BJ (cell line): ENCODE measurements at regions of chr2 and their contacts with region 1.

Region 1: GRCh38 chr2:27303093-27304025 is 4.9 kb downstream of the UCN start:
- DNase-seq: no peak
- H3K4me3 ChIP-seq: no peak overlapping the region
- H3K27me3 ChIP-seq: peaks cover 17% of the 10 kb centered on the region
- CTCF ChIP-seq: peak; percentile 87

Region 2: GRCh38 chr2:27095745-27096651 is 207.4 kb before region 1 on chr2:
- CTCF ChIA-PET with region 1: interaction called, 41 read pairs
- POLR2A ChIA-PET with region 1: interaction called, 4 read pairs
- DNase-seq: no peak
- H3K4me3 ChIP-seq: no peak overlapping the region
- H3K27me3 ChIP-seq: no peaks in the 10 kb centered on the region
- CTCF ChIP-seq: no peak

Region 3: DNA sequence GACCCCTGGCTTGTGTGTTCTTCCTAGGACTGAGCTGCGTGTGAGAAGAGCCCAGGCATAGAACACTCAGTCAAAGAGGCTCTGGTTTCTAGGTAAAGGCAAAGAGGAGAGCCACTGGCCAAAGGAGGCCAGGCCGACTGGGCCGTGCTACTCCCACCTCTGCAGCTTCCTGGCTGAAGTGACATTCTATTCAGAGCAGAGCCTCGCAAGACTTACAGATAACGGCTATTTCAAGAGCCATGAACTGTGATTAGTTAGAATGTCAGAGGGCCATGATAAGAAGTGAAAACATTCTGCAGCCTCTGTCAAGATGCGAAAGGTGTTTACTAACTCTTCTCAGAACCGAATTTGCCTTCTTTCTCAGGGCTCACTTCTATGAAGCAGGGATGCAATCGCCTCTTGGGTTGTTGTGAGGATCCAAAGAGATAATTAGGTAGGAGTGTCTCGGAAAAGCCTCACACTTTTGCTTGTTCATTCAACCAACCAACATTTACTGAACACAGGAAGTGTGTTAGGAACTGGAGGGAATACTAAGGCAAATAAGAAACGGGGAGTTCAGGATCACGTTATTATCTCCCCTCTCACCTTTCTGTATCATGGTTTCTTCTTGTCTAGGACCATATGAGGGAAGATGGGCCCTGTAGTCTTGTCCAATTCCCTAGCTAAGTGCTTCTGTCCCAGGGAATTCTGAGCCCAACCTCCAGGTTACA is 31.6 kb before region 1 on chr2:
- CTCF ChIA-PET with region 1: interaction called, 14 read pairs
- POLR2A ChIA-PET with region 1: no interaction called
- DNase-seq: no peak
- H3K4me3 ChIP-seq: no peak overlapping the region
- H3K27me3 ChIP-seq: peaks cover 17% of the 10 kb centered on the region
- CTCF ChIP-seq: no peak

Region 4: GRCh38 chr2:27291865-27292264 is 11.5 kb before region 1 on chr2:
- CTCF ChIA-PET with region 1: interaction called, 43 read pairs
- POLR2A ChIA-PET with region 1: no interaction called
- DNase-seq: no peak
- H3K4me3 ChIP-seq: no peak overlapping the region
- H3K27me3 ChIP-seq: peaks cover 12% of the 10 kb centered on the region
- CTCF ChIP-seq: no peak

Region 5: DNA sequence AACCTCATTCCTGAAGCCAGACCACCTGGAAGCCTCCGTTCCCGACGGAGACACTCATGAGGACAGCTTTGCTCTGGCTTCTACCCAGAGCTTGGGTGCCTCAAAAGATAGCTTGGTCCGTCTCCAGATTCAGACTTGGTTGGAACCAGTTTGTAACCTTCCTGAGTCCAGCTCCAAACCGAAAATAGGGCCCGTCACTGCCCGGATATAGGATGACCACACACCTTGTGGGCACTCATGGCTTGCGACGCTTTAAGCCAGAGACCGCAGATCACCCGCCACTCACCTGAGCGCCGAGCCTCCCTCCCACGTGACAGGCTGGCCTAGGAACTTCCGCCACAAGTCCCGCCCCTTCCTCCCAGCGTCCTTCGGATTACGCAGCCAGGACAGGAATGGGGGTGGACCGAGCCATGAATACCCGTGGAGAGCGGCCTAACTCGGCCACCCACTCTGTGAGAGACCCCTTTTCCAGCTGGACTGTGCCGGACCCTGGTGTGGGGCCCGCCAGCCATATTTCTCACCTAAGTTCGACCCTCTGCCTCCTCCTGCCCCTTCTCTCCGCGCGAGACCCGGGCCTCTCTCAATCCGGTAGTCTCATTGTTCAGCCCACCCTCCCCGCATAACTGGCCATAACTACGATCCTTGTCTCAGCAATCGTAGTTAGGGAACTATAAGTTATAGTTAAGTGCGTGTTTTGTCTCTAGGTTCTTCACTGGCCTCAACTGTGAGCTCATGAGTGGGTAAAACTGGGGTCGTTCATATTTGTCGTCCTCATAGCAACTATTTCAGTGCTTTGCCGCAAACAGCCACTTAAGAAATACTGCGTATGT is 19.6 kb after region 1 on chr2 and contains the start of gene MPV17:
- CTCF ChIA-PET with region 1: interaction called, 34 read pairs
- POLR2A ChIA-PET with region 1: no interaction called
- DNase-seq: peak; percentile 47
- H3K4me3 ChIP-seq: peak within 1 kb of the TSS; percentile 67
- H3K27me3 ChIP-seq: no peaks in the 10 kb centered on the region
- CTCF ChIP-seq: no peak
- polyA plus RNA-seq, gene MPV17: 177 and 188 TPM in 2 replicates